KBM-7 (cell line): ENCODE measurements at regions of chr1 and their contacts with region 1.

Region 1: DNA sequence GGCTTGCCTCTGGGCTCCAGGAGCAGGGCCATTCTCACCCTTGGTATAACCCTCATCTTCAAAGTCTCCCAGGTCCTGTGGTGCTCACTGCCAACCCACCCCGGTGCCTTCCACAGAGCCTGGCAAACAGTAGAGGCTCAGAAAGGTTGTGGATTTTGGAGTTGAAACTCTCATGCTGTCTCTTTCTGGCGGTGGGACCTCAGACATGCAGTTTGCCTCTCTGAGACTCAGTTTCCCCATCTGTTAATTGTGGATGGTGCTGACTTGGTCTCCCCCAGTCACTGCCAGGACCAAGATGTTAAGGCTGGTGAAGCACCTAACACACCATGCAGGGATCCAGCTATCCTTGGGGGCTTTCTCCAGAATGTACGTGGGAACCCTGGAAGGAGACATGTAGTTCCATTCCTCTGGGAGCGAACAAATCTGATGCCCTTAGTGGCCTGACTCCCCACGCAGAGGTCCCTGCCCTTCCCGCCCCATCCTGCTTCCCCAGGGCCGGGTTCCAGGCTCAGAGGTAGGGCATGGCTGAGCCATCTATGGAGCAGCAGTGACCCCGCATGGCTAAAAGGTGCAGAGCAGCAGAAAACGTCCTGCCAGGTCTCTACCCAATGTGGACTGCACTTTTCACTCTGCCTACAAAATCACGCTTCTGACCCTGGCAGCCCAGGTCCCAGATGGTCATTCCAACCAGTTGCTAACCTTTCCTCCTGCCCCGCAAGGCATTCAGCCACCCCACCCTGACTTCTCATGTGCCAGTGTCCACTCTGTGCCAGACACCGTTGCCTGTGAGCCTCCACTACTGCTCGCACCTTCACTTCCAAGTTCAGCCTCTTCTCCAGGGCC is 9.2 kb upstream of the TTC22 start:
- DNase-seq: peak; percentile 77

Region 2: GRCh38 chr1:53860967-53861411 is 949.3 kb before region 1 on chr1:
- in situ Hi-C with region 1: loop called (anchors 25 kb)
- DNase-seq: peak; percentile 73

Region 3: GRCh38 chr1:54715493-54716298 is 94.6 kb before region 1 on chr1 and contains the start of gene TTC4:
- in situ Hi-C with region 1: no loop called
- DNase-seq: peak; percentile 86